HEK293 (cell line): ENCODE measurements at regions of chr17 and their contacts with region 1.

Region 1: DNA sequence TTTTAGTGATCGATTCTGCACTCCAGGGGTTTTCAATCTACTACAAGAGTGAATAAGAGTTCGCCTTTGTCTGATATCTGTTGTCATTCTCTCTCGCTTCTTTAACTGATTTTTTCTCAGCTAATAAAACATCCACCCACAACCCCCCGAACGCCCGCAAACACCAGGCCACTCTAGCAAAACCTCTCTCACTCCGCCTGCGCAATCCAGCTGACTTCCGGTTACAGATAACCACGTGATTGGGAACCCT is 338 bp upstream of the RPL19 start:
- H3K4me3 ChIP-seq: peak overlapping the region; percentile 96
- H3K27ac ChIP-seq: peak overlapping the region; percentile 99
- H3K4me1 ChIP-seq: peaks cover 17% of the 10 kb centered on the region; the same call in 1 of the 2 replicates
- CTCF ChIP-seq: no peak

Region 2: GRCh38 chr17:39164675-39165143 is 35.0 kb before region 1 on chr17:
- CTCF ChIA-PET with region 1: interaction called, 13 read pairs
- POLR2A ChIA-PET with region 1: interaction called, 23 read pairs
- H3K4me3 ChIP-seq: no peak overlapping the region
- H3K27ac ChIP-seq: no peak overlapping the region
- H3K4me1 ChIP-seq: 0 out of 2 replicates have a peak, but pooled peaks cover 4% of the 10 kb centered on the region
- CTCF ChIP-seq: peak; percentile 90

Region 3: GRCh38 chr17:39219647-39220154 is 20.0 kb after region 1 on chr17:
- CTCF ChIA-PET with region 1: no interaction called
- POLR2A ChIA-PET with region 1: interaction called, 10 read pairs
- H3K4me3 ChIP-seq: no peak overlapping the region
- H3K27ac ChIP-seq: no peak overlapping the region
- H3K4me1 ChIP-seq: no peaks in the 10 kb centered on the region
- CTCF ChIP-seq: no peak

Region 4: DNA sequence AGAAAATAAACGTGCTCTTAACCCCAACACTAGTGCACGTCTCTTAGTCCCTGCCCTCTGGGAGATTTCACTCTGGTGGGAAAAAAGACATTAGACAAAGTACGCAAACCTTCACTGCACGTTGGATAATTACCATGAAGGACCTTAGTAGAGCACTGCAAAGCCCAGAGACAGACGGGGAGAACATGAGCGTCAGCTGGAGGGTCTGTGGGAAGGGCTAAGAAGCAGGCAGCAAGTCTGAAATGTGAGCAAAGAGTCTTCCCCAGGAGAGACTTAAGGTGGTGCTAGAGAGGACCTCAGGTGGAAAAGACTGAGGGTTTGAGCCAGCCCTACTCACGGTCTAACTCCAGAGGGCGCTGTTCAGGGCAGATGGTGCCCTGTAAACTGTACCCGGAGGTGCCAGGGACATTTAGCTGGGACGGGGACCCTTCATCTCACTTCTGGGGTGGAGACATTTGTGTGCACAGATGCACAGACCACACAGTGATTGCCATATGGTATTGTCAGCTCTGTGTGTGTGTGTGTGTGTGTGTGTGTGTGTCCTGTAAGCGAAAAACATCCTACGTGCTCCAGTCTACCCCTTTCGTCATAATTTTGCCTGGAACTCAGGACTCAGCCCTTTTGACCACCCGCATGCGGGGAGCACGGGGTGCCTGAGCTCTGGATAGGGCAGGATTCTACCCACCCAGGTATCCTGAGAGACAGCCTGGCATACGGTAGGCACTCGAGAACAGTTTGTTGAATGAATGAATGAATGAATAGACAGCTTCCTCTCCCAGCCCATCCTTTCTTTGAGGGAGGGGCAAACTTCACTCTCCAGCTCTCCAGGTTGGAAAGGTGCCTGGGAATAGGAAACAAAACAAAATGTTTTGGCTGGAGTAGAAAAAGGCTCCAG is 36.1 kb after region 1 on chr17:
- CTCF ChIA-PET with region 1: interaction called, 733 read pairs
- POLR2A ChIA-PET with region 1: interaction called, 47 read pairs
- H3K4me3 ChIP-seq: no peak overlapping the region
- H3K27ac ChIP-seq: no peak overlapping the region
- H3K4me1 ChIP-seq: peaks cover 10% of the 10 kb centered on the region
- CTCF ChIP-seq: peak; percentile 96

Region 5: GRCh38 chr17:39401412-39402243 is 201.9 kb after region 1 on chr17 and contains the start of gene FBXL20:
- CTCF ChIA-PET with region 1: no interaction called
- POLR2A ChIA-PET with region 1: interaction called, 10 read pairs
- H3K4me3 ChIP-seq: peak within 1 kb of the TSS; percentile 99
- H3K27ac ChIP-seq: peak within 1 kb of the TSS; percentile 93
- H3K4me1 ChIP-seq: peaks cover 17% of the 10 kb centered on the region; the same call in 1 of the 2 replicates
- CTCF ChIP-seq: peak; percentile 37; the same call in 1 of the 2 replicates

Region 6: GRCh38 chr17:39671651-39672521 is 472.1 kb after region 1 on chr17:
- CTCF ChIA-PET with region 1: no interaction called
- POLR2A ChIA-PET with region 1: no interaction called
- H3K4me3 ChIP-seq: no peak overlapping the region
- H3K27ac ChIP-seq: no peak overlapping the region
- H3K4me1 ChIP-seq: peaks cover 12% of the 10 kb centered on the region
- CTCF ChIP-seq: peak; percentile 80